ENCODE measurements at regions of chr5 and their contacts with region 1.

Region 1: DNA sequence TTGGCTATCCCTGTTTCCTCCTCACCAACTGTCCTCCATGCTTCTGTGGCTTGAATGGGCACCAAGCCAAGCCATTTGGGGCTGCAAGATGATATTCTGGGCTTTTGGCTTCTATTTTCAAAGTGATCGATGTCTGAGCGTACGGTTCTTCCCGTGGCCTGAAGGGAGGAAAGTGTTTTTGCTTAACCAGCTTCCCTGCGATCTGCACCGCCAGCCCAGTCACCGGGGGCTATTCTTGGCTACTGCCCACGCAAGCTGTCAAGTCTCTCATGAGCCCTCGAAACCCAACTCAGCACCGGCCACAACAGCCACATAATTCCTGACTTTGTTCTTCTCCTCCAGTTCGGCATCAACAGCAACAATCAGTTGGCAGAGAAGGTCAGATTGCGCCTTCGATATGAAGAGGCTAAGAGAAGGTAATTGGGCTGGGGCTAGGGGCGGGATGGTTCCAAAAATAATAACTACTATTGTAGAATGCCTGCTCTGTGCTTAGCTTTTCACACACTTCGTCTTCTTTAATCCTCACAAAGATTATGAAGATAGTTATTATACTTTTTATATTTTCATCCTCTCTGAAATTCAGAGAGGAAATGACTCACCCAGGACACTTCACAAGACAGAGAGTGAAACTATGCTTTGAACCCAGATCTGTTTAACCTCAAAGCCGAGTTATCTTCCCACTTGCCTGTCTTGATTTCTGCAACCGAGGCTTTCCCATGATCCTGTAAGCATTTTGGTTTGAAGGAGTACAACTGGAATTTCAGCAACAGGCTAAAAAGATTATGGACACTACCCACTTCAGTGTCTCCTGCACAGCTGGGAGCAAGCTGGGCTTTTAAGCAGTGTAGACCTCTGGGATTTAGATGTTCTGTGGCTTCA is 76.5 kb upstream of the RARS1 start:
- DNase-seq: peak; percentile 18
- H3K4me3 Mint-ChIP-seq: no peak overlapping the region
- H3K27ac Mint-ChIP-seq: no peak overlapping the region
- H3K4me1 Mint-ChIP-seq: peaks cover 21% of the 10 kb centered on the region
- H3K27me3 Mint-ChIP-seq: peaks cover 9% of the 10 kb centered on the region

Region 2: GRCh38 chr5:168291464-168291961 is 118.3 kb before region 1 on chr5 and contains the start of gene WWC1:
- CTCF ChIA-PET with region 1: no interaction called
- intact Hi-C with region 1: loop called (anchors 5 kb)
- DNase-seq: peak; percentile 78
- H3K4me3 Mint-ChIP-seq: peak within 1 kb of the TSS; percentile 64
- H3K27ac Mint-ChIP-seq: no peak within 1 kb of the TSS
- H3K4me1 Mint-ChIP-seq: peaks cover 22% of the 10 kb centered on the region
- H3K27me3 Mint-ChIP-seq: peaks cover 39% of the 10 kb centered on the region
- total RNA-seq, gene WWC1: 1.7 to 2.1 TPM

Region 3: DNA sequence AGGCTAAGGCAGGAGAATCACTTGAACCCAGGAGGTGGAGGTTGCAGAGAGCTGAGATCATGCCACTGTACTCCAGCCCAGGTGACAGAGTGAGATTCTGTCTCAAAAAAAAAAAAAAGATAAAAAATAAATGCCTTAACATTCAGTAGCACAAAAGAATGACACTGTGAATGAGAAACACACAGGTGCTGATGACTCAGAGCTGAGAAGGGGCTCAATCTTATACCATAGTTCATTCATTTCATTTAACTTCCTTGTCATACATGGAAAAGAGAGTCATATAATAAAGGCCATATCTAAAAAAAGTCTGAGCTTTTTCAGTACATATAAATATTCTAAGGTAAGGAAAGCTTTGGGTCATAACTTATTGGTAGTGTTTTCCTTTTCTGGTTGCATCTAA is 77.8 kb before region 1 on chr5:
- CTCF ChIA-PET with region 1: no interaction called
- intact Hi-C with region 1: loop called (anchors 2 kb)
- DNase-seq: peak; percentile 7
- H3K4me3 Mint-ChIP-seq: no peak overlapping the region
- H3K27ac Mint-ChIP-seq: no peak overlapping the region
- H3K4me1 Mint-ChIP-seq: peaks cover 3% of the 10 kb centered on the region
- H3K27me3 Mint-ChIP-seq: peaks cover 13% of the 10 kb centered on the region

Measured in activated naive CD4-positive, alpha-beta T cell treated with anti-CD3 and anti-CD28 coated beads for 36 hours (primary cell).